Gastrocnemius medialis (tissue), 4 donors: ENCODE measurements at regions of chr12 and their contacts with region 1.

Region 1: GRCh38 chr12:6735448-6736191 is 11.8 kb downstream of the COPS7A start:
- DNase-seq: peak; percentile 43 to 72
- ATAC-seq: peak; percentile 94 to 95
- H3K4me3 ChIP-seq: no peak overlapping the region
- H3K27ac ChIP-seq: peak overlapping the region; percentile 66 to 76 (median 72)
- H3K4me1 ChIP-seq: peaks cover 0 to 9% of the 10 kb centered on the region in 2 donors
- H3K27me3 ChIP-seq: no peaks in the 10 kb centered on the region
- CTCF ChIP-seq: peak; percentile 59 to 78 (median 70)
- POLR2A ChIP-seq: no peak

Region 2: GRCh38 chr12:6632026-6632983 is 103.3 kb before region 1 on chr12:
- in situ Hi-C with region 1: no loop called
- intact Hi-C with region 1: no loop called
- DNase-seq: no peak
- ATAC-seq: peak in 1 of 2 donors; percentile 51
- H3K4me3 ChIP-seq: no peak overlapping the region
- H3K27ac ChIP-seq: peak overlapping the region in 1 of 4 donors; percentile 38
- H3K4me1 ChIP-seq: no peaks in the 10 kb centered on the region
- H3K27me3 ChIP-seq: no peaks in the 10 kb centered on the region
- CTCF ChIP-seq: no peak
- POLR2A ChIP-seq: peak in 1 of 2 donors; percentile 11

Region 3: GRCh38 chr12:6825398-6826124 is 89.9 kb after region 1 on chr12:
- in situ Hi-C with region 1: no loop called
- intact Hi-C with region 1: loop called (anchors 5 kb)
- DNase-seq: peak; percentile 48 to 69
- ATAC-seq: peak; percentile 63 to 75
- H3K4me3 ChIP-seq: no peak overlapping the region
- H3K27ac ChIP-seq: no peak overlapping the region
- H3K4me1 ChIP-seq: peaks cover 3 to 11% of the 10 kb centered on the region in 2 donors
- H3K27me3 ChIP-seq: peaks cover 31 to 78% (median 53%) of the 10 kb centered on the region in 3 donors
- CTCF ChIP-seq: peak; percentile 62 to 85 (median 80)
- POLR2A ChIP-seq: no peak

Region 4: DNA sequence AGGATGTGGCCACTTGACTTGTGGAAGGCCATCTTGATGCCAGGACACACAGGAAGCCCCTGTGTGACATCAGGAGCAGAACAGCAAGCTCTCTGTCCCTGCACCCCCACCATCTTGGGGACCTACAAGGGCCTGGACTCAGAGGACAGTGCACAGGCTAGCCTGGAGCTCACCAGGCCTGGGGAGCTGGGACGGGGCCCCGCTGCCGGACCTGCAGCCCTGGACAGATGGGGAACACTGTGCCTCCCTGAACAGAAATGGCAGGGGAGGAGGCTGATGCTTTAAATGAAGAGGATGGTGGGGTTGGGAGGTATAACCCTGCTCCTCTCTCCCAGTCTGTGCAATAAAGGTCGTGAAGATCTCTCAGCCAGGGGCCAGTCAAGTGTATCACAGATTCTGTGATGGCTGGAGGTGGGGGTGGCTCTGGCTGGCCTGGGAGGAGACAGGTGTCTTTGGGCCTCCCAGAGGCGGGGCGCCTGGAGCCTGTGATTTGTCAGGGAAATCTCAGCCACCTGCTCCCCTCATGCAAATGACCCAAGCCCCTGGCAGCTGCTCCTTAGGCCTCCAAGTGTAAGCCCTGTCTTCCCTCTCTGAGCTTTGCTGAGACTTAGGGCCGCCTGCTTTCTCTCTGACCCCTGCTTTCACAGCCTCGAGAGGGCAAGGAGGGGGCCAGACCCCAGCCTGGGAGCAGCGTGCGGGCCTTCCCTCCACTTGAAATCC is 104.0 kb after region 1 on chr12:
- in situ Hi-C with region 1: loop called in 1 of 4 experiments (anchors 10 kb)
- intact Hi-C with region 1: no loop called
- DNase-seq: no peak
- ATAC-seq: no peak
- H3K4me3 ChIP-seq: no peak overlapping the region
- H3K27ac ChIP-seq: no peak overlapping the region
- H3K4me1 ChIP-seq: no peaks in the 10 kb centered on the region
- H3K27me3 ChIP-seq: no peaks in the 10 kb centered on the region
- CTCF ChIP-seq: no peak
- POLR2A ChIP-seq: no peak

Region 5: DNA sequence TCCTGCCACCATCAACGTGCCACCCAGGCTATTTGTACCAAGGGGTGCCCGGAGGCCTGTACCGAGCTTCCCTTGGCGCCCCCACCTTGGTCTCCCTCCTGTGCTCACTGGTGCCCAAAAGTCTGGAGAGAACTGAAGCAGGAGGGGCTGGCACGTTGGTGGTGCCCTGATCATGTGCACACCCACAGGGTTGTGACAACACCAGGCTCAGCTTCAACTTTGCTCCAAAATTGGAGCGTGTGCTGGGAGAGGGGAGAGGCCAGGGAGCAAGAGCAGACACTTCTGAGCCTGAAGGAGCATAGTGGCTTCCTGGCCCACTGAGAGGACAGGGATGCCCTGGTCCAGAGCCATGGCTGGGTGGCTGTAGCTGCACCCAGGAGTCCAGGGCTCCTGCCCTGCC is 295.7 kb after region 1 on chr12:
- in situ Hi-C with region 1: no loop called
- intact Hi-C with region 1: no loop called
- DNase-seq: no peak
- ATAC-seq: no peak
- H3K4me3 ChIP-seq: no peak overlapping the region
- H3K27ac ChIP-seq: no peak overlapping the region
- H3K4me1 ChIP-seq: no peaks in the 10 kb centered on the region
- H3K27me3 ChIP-seq: no peaks in the 10 kb centered on the region
- CTCF ChIP-seq: no peak
- POLR2A ChIP-seq: no peak